ENCODE measurements at regions of chr12 and their contacts with region 1.

Region 1: DNA sequence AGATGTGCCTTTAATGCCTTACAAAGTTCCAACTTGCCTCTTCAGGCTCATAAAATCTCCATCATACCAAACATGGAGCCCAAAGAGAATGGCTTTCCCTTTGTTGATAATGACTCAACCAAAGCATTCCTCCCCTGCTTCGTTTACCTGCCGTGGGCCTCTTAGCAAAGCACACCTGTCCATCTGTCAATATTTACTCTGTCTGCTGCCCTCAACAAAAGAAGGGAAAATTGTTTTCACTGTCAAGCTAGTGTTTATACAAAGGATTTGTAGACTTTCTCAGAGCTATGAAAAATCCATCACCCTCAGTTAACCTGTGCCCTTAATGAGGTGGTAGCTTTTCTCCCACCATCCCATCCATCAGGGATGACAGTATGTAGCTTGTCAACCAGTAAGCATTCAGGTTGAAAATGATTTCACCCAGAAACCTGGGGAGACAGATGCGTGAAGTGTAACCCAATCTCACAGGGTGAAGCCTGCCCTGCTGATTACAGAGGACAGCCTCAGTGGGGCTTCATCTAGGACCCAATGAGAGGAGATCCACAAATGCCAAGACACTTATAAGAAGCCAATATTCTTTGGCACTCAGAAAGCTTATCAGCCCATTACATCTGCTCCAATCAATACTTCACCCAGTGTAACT is 278.1 kb downstream of the NUAK1 start:
- DNase-seq: no peak
- ATAC-seq: no peak
- H3K4me3 ChIP-seq: no peak overlapping the region
- H3K27ac ChIP-seq: no peak overlapping the region
- H3K4me1 ChIP-seq: peaks cover 0 to 2% of the 10 kb centered on the region in 2 donors
- H3K27me3 ChIP-seq: no peaks in the 10 kb centered on the region

Region 2: GRCh38 chr12:105036937-105037649 is 823.6 kb before region 1 on chr12:
- intact Hi-C with region 1: no loop called
- DNase-seq: no peak
- ATAC-seq: no peak
- H3K4me3 ChIP-seq: no peak overlapping the region
- H3K27ac ChIP-seq: no peak overlapping the region
- H3K4me1 ChIP-seq: peaks cover 0 to 3% of the 10 kb centered on the region in 2 donors
- H3K27me3 ChIP-seq: no peaks in the 10 kb centered on the region

Region 3: GRCh38 chr12:105915997-105916759 is 55.5 kb after region 1 on chr12:
- intact Hi-C with region 1: loop called in 1 of 2 experiments (anchors 5 kb)
- DNase-seq: no peak
- ATAC-seq: no peak
- H3K4me3 ChIP-seq: no peak overlapping the region
- H3K27ac ChIP-seq: no peak overlapping the region
- H3K4me1 ChIP-seq: no peaks in the 10 kb centered on the region
- H3K27me3 ChIP-seq: no peaks in the 10 kb centered on the region

Region 4: DNA sequence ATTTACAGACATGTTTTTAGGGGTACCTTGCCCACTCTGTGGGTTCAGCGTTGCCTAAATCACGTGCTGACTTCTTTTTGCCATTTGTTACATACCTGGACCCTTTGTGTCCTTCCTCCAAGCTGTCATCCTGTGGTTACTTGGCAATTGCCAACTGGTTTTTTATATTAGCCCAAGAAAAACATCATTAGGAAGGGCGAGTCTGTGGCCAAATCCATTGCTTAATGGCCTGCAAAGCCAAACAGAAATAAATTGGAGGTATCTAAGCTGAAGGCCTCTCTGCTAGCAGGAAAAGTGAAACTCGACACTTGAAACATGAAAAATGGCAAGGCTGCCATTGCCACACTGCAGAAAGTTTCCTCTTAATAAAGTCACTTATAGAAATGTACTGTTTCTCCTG is 87.6 kb after region 1 on chr12:
- intact Hi-C with region 1: loop called in 1 of 2 experiments (anchors 5 kb)
- DNase-seq: peak in 1 of 2 donors; percentile 50
- ATAC-seq: peak; percentile 64
- H3K4me3 ChIP-seq: no peak overlapping the region
- H3K27ac ChIP-seq: peak overlapping the region; percentile 65 to 76
- H3K4me1 ChIP-seq: peaks cover 2 to 12% of the 10 kb centered on the region in 2 donors
- H3K27me3 ChIP-seq: no peaks in the 10 kb centered on the region